Activated T-helper 2 cell treated with anti-CD3 and anti-CD28 coated beads, Interferon-gamma antibody, Interleukin-2, Interleukin-4, amounts not matched to agents 10 μg/mL and 5 μg/mL and 100 μg/mL, durations not matched to agents 14 hours and 24 hours and 36 hours (primary cell): ENCODE measurements at regions of chr3 and their contacts with region 1.

Region 1: GRCh38 chr3:108818404-108818803 is 4.2 kb upstream of the TRAT1 start:
- DNase-seq: peak; percentile 54
- H3K4me3 Mint-ChIP-seq: no peak overlapping the region
- H3K27ac Mint-ChIP-seq: peak overlapping the region; percentile 26
- H3K4me1 Mint-ChIP-seq: peaks cover 30% of the 10 kb centered on the region
- H3K27me3 Mint-ChIP-seq: no peaks in the 10 kb centered on the region

Region 2: GRCh38 chr3:108662130-108662738 is 156.2 kb before region 1 on chr3:
- intact Hi-C with region 1: loop called (anchors 1 kb)
- DNase-seq: peak; percentile 13
- H3K4me3 Mint-ChIP-seq: no peak overlapping the region
- H3K27ac Mint-ChIP-seq: no peak overlapping the region
- H3K4me1 Mint-ChIP-seq: peaks cover 24% of the 10 kb centered on the region
- H3K27me3 Mint-ChIP-seq: peaks cover 2% of the 10 kb centered on the region

Region 3: GRCh38 chr3:108806316-108806715 is 12.1 kb before region 1 on chr3:
- intact Hi-C with region 1: loop called (anchors 1 kb)
- DNase-seq: peak; percentile 58
- H3K4me3 Mint-ChIP-seq: no peak overlapping the region
- H3K27ac Mint-ChIP-seq: peak overlapping the region; percentile 68
- H3K4me1 Mint-ChIP-seq: peaks cover 22% of the 10 kb centered on the region
- H3K27me3 Mint-ChIP-seq: no peaks in the 10 kb centered on the region

Region 4: DNA sequence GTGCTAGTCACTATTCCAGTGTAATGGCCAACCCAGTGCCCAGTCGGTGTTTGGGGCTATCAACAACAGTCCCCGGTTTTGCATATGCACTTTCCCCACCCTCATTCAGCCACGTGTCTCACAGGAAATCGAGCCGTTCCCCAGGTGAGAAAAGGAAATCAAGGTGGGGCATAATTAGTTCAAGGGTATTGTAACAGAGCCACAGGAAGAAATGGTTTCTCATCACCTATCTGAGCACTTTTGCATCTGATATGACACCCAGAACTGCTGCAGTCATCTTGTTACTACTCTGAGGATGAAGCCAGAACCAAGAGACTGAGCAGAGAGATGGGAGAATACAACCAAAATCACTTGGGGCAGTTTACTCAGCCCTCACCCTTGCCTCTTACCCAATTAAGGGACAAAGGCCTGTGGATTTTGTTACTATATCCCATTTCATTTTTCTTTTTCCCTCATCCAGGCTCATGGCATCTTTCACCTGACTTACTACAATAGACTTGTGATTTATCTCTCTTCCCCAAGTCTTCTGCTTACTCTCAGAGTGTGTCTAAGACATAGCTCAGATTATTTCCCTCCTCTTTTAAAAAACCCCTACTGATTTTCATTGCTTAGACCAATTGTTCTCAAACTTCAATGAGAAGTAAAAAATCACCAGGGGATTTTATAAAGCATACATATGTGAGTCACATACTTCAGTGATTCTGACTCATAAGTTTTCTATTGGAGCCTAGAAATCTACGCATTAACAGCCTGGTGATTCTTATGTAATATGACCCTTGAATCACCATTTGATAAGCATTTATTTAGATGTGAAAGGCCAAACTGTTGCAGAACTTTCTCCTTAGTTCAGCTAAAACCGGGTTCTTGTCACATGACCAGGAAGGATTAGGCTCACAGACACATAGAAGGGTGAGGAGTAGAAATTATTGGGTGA is 44.7 kb after region 1 on chr3:
- intact Hi-C with region 1: loop called (anchors 1 kb)
- DNase-seq: no peak
- H3K4me3 Mint-ChIP-seq: no peak overlapping the region
- H3K27ac Mint-ChIP-seq: peak overlapping the region; percentile 98
- H3K4me1 Mint-ChIP-seq: peaks cover 25% of the 10 kb centered on the region
- H3K27me3 Mint-ChIP-seq: no peaks in the 10 kb centered on the region

Region 5: DNA sequence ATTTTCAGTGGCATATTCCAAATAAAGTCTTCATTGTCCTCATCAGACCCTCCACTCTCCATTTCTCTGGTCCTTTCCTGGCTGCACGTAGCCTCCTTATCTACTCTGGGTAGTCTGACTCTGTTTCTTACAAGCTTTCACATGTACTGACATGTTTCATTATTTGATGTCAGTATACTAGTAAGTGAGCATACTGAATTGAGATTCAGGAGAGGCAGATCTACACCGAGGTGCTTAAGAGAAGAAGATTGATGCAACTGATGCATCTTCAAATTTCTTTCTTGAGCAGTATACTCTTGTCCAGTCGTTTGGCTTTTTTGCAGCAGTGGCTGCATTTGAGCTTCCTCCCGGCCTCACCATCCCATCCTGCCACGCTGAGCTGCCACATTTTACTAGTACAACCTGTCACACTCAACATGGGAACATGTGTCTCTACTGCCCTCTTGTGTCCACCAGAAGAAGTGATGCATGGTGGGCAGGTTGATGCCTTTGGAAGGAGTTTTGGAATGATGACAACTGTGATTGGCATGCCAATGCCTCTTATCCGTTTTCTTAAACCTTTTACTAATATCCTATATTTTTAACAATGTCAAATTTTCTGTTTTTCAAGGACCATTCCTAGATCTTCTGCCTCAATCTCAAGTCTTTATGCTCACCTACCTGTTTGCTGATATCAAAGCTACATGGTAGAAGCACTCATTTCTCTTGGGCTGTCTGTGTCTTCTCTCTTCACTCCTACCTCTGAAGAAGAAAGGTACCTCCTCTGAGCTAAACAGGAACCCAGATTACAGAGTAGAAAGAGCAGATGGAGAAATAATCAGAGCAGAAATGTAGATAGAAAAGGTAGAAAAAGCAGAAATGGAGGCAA is 96.6 kb after region 1 on chr3:
- intact Hi-C with region 1: loop called (anchors 1 kb)
- DNase-seq: peak; percentile 57
- H3K4me3 Mint-ChIP-seq: peak overlapping the region; percentile 5
- H3K27ac Mint-ChIP-seq: no peak overlapping the region
- H3K4me1 Mint-ChIP-seq: peaks cover 16% of the 10 kb centered on the region
- H3K27me3 Mint-ChIP-seq: peaks cover 19% of the 10 kb centered on the region